ENCODE measurements at regions of chr1 and their contacts with region 1.

Region 1: DNA sequence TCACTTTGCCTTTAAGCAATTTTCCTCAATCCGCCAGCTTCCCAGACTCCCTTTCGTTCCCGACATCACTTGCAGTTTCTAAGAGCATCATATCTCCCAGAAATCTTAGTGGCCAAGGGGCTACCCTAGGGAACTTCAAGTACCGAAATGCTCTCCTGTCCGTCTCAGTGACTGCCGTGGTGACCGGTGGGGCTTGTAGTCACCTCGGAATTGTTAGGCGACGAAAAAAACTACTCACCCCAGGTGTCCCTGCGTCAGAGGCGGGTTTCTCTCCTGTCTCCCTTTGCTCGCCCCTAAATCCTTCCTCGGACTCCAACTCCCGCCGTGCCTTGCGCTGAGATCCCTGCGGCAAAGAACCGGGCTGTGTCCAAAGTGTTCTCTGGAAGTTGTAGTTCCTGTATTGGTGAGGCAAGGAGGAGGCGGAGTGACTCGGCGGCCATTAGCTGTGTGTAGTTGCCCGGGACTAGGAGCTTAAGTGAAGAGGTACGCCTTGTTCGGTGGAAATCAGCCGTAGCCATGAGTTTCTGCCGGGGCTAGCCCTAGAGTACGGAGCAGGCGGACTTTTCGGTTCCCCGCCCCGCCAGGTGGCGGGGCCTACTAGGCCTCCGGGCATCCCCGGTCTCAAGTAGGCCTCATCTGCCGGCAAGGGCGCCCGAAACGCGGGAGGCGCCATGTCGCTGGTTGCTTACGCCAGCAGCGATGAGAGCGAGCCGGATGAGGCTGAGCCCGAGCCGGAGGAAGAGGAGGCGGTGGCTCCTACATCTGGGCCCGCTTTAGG is at the start of gene PRCC:
- DNase-seq: peak; percentile 98 to 99
- ATAC-seq: peak; percentile 98
- H3K4me3 ChIP-seq: peak within 1 kb of the TSS; percentile 75 to 91
- H3K27ac ChIP-seq: peak within 1 kb of the TSS in 1 of 2 donors; percentile 83
- H3K4me1 ChIP-seq: peaks cover 2 to 3% of the 10 kb centered on the region in 2 donors
- H3K27me3 ChIP-seq: no peaks in the 10 kb centered on the region
- total RNA-seq, gene PRCC: 41.0 to 50.2 TPM

Region 2: GRCh38 chr1:156444407-156445001 is 322.8 kb before region 1 on chr1:
- intact Hi-C with region 1: no loop called
- DNase-seq: no peak
- ATAC-seq: no peak
- H3K4me3 ChIP-seq: no peak overlapping the region
- H3K27ac ChIP-seq: no peak overlapping the region
- H3K4me1 ChIP-seq: no peaks in the 10 kb centered on the region
- H3K27me3 ChIP-seq: no peaks in the 10 kb centered on the region

Region 3: GRCh38 chr1:156601122-156601830 is 166.0 kb before region 1 on chr1 and contains the start of gene GPATCH4:
- intact Hi-C with region 1: no loop called
- DNase-seq: peak; percentile 89 to 90
- ATAC-seq: peak; percentile 94
- H3K4me3 ChIP-seq: peak within 1 kb of the TSS; percentile 56
- H3K27ac ChIP-seq: peak within 1 kb of the TSS in 1 of 2 donors; percentile 67
- H3K4me1 ChIP-seq: no peaks in the 10 kb centered on the region
- H3K27me3 ChIP-seq: no peaks in the 10 kb centered on the region
- total RNA-seq, gene GPATCH4: 15.6 to 24.0 TPM

Region 4: DNA sequence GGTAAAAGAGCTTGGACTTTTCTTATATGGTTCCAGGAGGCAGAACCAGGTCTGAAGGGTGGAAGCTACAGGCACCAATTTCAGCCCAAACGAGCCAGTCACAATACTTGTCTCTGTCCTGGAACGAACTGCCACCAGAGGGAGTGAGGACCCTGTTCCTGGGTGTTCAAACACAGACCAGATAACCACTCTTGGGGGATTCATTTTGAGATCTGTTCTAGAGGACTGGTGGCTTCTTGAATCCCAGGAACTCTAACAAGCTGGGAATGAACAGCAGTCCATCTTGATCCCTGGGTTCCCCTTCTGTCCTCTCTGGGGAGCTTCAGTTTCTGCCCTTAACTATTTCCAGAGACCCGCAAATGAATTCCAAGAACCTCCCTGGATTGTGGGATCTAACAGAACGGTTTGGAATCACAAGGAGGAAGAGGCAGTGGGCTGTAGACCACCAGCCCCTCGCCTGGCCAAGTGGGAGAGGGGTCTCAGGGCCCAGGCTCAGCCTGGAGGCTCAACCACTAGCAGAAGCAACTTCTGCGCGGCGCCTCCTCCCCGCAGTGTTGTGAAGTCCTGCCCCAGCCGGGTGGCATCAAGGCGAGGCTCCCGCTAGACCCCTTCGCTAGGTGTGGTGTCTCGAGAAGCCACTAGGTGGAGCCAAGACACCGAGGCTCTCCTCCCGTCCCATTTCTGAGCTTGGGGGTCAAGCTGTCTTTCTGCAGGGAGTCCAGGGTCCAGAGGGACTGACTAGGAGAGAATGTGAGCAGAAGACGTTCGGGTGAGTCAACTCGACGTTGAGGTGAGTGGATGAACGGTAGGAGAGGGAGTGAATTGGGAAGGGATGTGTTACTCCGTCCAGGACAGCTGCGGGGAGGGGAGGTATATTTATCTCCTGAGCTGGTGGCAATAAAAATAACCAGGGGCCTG is 78.0 kb before region 1 on chr1:
- intact Hi-C with region 1: loop called in 1 of 2 experiments (anchors 10 kb)
- DNase-seq: peak; percentile 86 to 91
- ATAC-seq: peak; percentile 93
- H3K4me3 ChIP-seq: no peak overlapping the region
- H3K27ac ChIP-seq: no peak overlapping the region
- H3K4me1 ChIP-seq: no peaks in the 10 kb centered on the region
- H3K27me3 ChIP-seq: no peaks in the 10 kb centered on the region

Region 5: DNA sequence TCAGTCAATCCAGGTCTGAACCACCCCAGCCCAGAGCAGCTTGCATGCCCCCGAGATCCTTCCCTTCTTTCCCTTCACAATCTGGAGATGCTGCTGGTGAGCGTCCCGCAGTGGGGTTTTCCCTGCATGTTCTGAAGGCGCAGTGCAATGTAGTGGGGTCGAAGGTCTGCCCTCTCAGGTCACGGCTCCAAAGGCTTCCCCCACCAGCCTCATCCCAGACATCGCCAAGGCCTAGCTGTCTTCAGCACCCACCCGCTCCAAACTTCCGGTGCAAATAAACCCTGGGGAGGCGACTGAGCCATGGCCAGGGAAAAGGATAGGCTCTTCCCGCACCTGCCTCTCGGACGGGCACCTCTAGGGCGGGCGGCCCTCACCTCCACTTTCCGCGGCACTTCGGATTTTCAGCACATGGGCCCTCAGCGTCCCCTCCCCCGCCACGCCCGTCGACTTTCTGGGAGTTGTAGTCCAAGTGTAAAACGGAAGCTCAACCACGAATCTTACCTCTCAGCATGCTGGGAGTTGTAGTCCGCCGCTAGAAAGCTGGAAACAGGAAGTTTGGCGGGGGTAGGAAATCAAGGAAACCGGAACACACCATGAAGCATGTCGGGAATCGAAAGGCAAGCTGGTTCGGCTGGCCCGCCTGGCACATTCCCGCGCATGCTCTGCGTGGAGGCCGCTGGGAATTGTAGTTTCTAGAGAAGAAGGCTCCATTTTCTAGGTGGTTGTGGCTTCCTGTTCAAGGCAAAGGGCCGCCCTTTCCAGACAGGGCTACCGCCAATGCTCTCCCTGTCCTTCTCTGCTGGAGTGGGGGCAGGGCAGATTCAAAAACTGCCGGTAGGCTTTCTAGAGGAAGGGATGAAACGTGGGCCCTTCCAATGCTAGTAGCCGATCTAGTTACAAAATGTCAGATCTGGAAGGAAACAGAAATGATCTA is 26.3 kb before region 1 on chr1 and contains the start of gene MRPL24:
- intact Hi-C with region 1: loop called in 1 of 2 experiments (anchors 1 kb)
- DNase-seq: peak; percentile 98
- ATAC-seq: peak; percentile 95
- H3K4me3 ChIP-seq: peak within 1 kb of the TSS; percentile 22 to 44
- H3K27ac ChIP-seq: peak within 1 kb of the TSS; percentile 38 to 90
- H3K4me1 ChIP-seq: no peaks in the 10 kb centered on the region
- H3K27me3 ChIP-seq: no peaks in the 10 kb centered on the region
- total RNA-seq, gene MRPL24: 44.0 to 46.1 TPM

Region 6: GRCh38 chr1:156751758-156752757 is 15.2 kb before region 1 on chr1:
- intact Hi-C with region 1: loop called (anchors 1 to 2 kb)
- DNase-seq: peak; percentile 99
- ATAC-seq: peak; percentile 91
- H3K4me3 ChIP-seq: peak overlapping the region; percentile 69 to 84
- H3K27ac ChIP-seq: peak overlapping the region in 1 of 2 donors; percentile 55
- H3K4me1 ChIP-seq: no peaks in the 10 kb centered on the region
- H3K27me3 ChIP-seq: no peaks in the 10 kb centered on the region